CD8-positive, alpha-beta T cell (primary cell): ENCODE measurements at regions of chr16 and their contacts with region 1.

Region 1: GRCh38 chr16:14268073-14268472 is 197.0 kb downstream of the MRTFB start:
- DNase-seq: no peak
- ATAC-seq: no peak
- H3K4me3 ChIP-seq: no peak overlapping the region
- H3K4me3 Mint-ChIP-seq: no peak overlapping the region
- H3K27ac ChIP-seq: no peak overlapping the region
- H3K27ac Mint-ChIP-seq: no peak overlapping the region
- H3K4me1 ChIP-seq: no peaks in the 10 kb centered on the region
- H3K4me1 Mint-ChIP-seq: no peaks in the 10 kb centered on the region
- H3K27me3 ChIP-seq: no peaks in the 10 kb centered on the region
- H3K27me3 Mint-ChIP-seq: no peaks in the 10 kb centered on the region
- CTCF ChIP-seq: no peak

Region 2: DNA sequence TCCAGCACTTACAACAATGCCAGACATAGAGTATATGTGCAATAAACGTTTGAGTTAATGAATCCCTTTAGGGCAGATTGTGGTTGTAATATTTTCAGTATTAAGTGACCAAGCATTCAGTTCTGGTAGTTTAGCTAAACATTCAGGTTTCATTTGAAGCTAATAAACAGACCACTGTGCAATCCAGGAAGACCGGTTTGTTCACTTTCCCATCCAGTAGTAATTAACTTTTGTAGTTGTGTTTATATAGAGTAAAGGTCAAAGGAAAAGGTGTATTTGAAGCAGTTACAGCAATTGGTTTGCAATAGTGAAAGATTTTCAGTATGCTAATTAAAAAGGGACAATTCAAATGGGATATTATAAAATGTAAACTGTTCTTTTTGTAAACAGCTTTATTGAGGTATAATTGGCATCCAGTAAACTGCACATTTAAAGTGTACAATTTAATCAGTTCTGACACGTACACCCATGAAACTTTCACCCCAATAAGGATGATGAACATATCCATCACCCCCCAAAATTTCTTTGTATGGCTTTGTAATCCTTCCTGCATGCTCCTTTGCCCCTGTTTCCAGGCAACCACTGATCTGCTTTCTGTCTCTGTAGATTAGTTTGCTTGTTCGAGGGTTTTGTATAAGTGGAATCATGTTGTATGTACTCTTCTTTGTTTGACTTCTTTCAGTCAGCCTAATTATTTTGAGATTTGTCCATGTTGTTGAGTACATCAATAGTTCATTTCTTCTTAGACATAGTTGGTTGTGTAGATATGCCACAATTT is 170.7 kb before region 1 on chr16:
- CTCF ChIA-PET with region 1: no interaction called
- POLR2A ChIA-PET with region 1: no interaction called
- intact Hi-C with region 1: no loop called
- DNase-seq: no peak
- ATAC-seq: no peak
- H3K4me3 ChIP-seq: no peak overlapping the region
- H3K4me3 Mint-ChIP-seq: no peak overlapping the region
- H3K27ac ChIP-seq: no peak overlapping the region
- H3K27ac Mint-ChIP-seq: no peak overlapping the region
- H3K4me1 ChIP-seq: no peaks in the 10 kb centered on the region
- H3K4me1 Mint-ChIP-seq: peaks cover 43% of the 10 kb centered on the region
- H3K27me3 ChIP-seq: no peaks in the 10 kb centered on the region
- H3K27me3 Mint-ChIP-seq: no peaks in the 10 kb centered on the region
- CTCF ChIP-seq: no peak

Region 3: GRCh38 chr16:14202697-14203096 is 65.4 kb before region 1 on chr16:
- CTCF ChIA-PET with region 1: no interaction called
- POLR2A ChIA-PET with region 1: no interaction called
- intact Hi-C with region 1: no loop called
- DNase-seq: peak in 1 of 9 experiments; percentile 10
- ATAC-seq: no peak
- H3K4me3 ChIP-seq: no peak overlapping the region
- H3K4me3 Mint-ChIP-seq: no peak overlapping the region
- H3K27ac ChIP-seq: no peak overlapping the region
- H3K27ac Mint-ChIP-seq: no peak overlapping the region
- H3K4me1 ChIP-seq: no peaks in the 10 kb centered on the region
- H3K4me1 Mint-ChIP-seq: peaks cover 6% of the 10 kb centered on the region
- H3K27me3 ChIP-seq: no peaks in the 10 kb centered on the region
- H3K27me3 Mint-ChIP-seq: no peaks in the 10 kb centered on the region
- CTCF ChIP-seq: no peak

Region 4: GRCh38 chr16:14384745-14385144 is 116.7 kb after region 1 on chr16:
- CTCF ChIA-PET with region 1: no interaction called
- POLR2A ChIA-PET with region 1: no interaction called
- intact Hi-C with region 1: loop called in 1 of 2 experiments (anchors 5 kb)
- DNase-seq: no peak
- ATAC-seq: no peak
- H3K4me3 ChIP-seq: no peak overlapping the region
- H3K4me3 Mint-ChIP-seq: no peak overlapping the region
- H3K27ac ChIP-seq: no peak overlapping the region
- H3K27ac Mint-ChIP-seq: no peak overlapping the region
- H3K4me1 ChIP-seq: no peaks in the 10 kb centered on the region
- H3K4me1 Mint-ChIP-seq: no peaks in the 10 kb centered on the region
- H3K27me3 ChIP-seq: no peaks in the 10 kb centered on the region
- H3K27me3 Mint-ChIP-seq: no peaks in the 10 kb centered on the region
- CTCF ChIP-seq: no peak

Region 5: DNA sequence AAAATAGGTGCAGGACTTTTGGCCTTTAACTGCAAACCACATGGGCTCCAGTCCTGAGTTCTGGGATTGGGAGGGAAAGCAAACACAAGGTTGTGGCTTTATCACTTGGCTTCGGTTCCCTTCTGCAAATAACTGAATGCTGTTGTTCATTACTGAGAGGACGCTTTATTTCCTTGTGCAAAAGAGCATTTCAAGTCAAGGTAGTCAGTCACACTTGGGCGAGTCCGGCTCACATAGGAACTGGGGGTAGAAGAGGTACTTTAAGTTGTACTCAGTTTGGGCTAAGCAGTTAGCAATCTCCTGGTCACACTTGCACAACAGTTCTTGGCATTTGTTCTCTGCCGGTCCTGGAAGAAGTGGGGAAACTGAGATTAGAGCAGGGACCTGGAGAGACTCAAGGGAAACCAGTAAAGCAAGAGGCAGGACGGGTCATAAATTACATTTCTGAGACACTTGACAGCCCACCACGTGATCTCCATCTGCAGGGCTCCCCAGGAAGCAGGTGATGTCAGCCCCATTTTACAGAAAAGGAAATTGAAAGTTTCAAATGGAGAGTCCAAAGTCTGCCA is 404.4 kb after region 1 on chr16:
- CTCF ChIA-PET with region 1: no interaction called
- POLR2A ChIA-PET with region 1: no interaction called
- intact Hi-C with region 1: no loop called
- DNase-seq: peak in 1 of 9 experiments; percentile 14
- ATAC-seq: no peak
- H3K4me3 ChIP-seq: no peak overlapping the region
- H3K4me3 Mint-ChIP-seq: no peak overlapping the region
- H3K27ac ChIP-seq: no peak overlapping the region
- H3K27ac Mint-ChIP-seq: peak overlapping the region; percentile 28
- H3K4me1 ChIP-seq: no peaks in the 10 kb centered on the region
- H3K4me1 Mint-ChIP-seq: peaks cover 6% of the 10 kb centered on the region
- H3K27me3 ChIP-seq: no peaks in the 10 kb centered on the region
- H3K27me3 Mint-ChIP-seq: no peaks in the 10 kb centered on the region
- CTCF ChIP-seq: no peak

Region 6: DNA sequence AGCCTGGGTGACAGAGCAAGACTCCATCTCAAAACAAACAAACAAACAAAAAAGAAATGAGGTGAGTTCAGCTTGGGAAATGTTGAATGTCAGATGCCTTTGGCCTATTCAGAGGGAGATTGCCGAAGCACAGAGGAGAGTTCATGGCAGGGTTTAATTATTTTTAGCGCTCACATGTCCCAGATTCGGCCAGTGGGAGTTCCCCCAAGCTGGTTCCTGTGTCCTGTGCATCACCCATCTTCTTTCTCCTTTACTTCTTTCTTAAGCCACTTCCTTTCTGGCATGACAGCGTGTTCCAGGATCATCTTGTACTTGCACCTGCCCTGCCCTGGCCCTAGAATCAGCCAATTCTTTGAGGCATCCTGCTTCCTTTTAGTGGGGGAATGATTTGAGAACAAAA is 1136.7 kb after region 1 on chr16:
- CTCF ChIA-PET with region 1: no interaction called
- POLR2A ChIA-PET with region 1: no interaction called
- intact Hi-C with region 1: no loop called
- DNase-seq: no peak
- ATAC-seq: no peak
- H3K4me3 ChIP-seq: no peak overlapping the region
- H3K4me3 Mint-ChIP-seq: no peak overlapping the region
- H3K27ac ChIP-seq: no peak overlapping the region
- H3K27ac Mint-ChIP-seq: no peak overlapping the region
- H3K4me1 ChIP-seq: no peaks in the 10 kb centered on the region
- H3K4me1 Mint-ChIP-seq: no peaks in the 10 kb centered on the region
- H3K27me3 ChIP-seq: no peaks in the 10 kb centered on the region
- H3K27me3 Mint-ChIP-seq: peaks cover 5% of the 10 kb centered on the region
- CTCF ChIP-seq: no peak